SK-N-SH (cell line): ENCODE measurements at regions of chr10 and their contacts with region 1.

Region 1: GRCh38 chr10:6659471-6659870 is 79.4 kb upstream of the PRKCQ start:
- DNase-seq: no peak
- H3K4me3 ChIP-seq: no peak overlapping the region
- H3K27ac ChIP-seq: no peak overlapping the region
- H3K4me1 ChIP-seq: no peaks in the 10 kb centered on the region
- H3K27me3 ChIP-seq: no peaks in the 10 kb centered on the region
- CTCF ChIP-seq: no peak
- EP300 ChIP-seq: no peak
- RAD21 ChIP-seq: no peak

Region 2: DNA sequence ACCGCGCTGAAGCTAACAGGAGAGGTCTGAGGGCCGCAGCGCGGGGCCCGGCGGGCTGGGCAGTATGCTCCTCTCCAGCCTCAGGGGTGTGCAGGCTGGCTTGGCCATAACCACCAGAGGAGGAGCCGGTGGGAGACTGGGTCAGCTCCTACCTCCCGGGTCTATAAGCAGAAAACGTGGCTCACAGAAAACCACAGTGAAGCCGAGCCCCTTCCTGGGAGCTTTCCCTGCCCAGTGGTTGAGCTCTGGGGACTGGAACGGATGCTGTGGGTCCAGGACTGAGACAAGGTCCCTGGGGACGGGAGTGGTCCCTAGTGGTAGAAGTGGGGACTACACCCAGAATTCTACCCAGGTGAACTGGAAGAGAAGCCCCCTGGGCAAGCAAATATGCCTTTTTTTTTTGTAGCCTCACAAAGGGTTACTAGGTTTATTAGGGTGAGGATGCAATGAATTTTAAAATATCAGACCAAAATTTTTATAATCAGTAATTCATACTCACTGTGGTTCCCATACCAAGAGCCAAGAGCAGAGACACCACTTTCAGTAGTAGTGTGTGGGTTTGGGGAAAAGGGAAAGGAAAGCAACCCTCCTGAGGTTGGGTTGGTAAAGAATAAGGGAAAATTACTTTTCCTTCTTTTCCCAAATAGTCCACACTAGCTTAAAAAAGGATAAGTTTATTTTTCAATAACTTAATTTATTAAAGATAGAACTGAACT is 11.5 kb before region 1 on chr10:
- CTCF ChIA-PET with region 1: interaction called, 12 read pairs
- POLR2A ChIA-PET with region 1: no interaction called
- DNase-seq: peak; percentile 75
- H3K4me3 ChIP-seq: no peak overlapping the region
- H3K27ac ChIP-seq: no peak overlapping the region
- H3K4me1 ChIP-seq: no peaks in the 10 kb centered on the region
- H3K27me3 ChIP-seq: no peaks in the 10 kb centered on the region
- CTCF ChIP-seq: peak; percentile 70
- EP300 ChIP-seq: no peak
- RAD21 ChIP-seq: peak; percentile 63